Activated CD4-positive, alpha-beta memory T cell treated with anti-CD3 and anti-CD28 coated beads for 36 hours (primary cell): ENCODE measurements at regions of chr17 and their contacts with region 1.

Region 1: DNA sequence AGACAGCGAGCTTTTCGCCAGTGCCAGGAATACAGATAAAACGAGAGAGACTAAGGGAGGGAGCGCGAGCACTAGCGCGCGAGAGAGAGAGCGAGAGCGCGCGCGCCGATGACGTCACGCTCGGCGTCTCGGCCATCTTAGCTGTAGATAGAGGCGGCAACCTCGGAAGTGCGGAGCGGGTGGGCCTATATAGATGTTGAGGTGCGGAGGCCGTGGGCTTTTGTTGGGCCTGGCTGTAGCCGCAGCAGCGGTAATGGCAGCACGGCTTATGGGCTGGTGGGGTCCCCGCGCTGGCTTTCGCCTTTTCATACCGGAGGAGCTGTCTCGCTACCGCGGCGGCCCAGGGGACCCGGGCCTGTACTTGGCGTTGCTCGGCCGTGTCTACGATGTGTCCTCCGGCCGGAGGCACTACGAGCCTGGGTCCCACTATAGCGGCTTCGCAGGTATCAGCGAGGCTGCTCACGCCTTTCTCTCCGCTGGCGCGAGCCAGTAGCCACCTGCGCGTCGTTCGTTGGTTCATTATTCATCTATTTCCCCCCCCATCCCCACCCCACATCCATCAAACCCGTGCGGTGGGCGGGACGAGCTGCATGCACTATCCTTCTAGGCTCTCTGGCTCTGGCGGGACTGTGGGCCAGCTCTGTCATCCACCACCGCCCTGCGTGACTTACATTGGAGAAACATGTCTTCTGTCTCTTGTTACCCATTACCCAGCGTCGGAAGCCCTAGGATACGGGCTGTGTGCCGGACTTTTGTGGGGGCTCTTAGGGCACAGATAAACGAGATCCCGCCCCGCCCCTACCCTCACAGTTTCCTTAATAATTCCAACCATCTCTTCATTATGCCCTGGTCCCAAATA is 795 bp downstream of the CYB5D2 start:
- DNase-seq: peak; percentile 93
- H3K4me3 Mint-ChIP-seq: peak overlapping the region; percentile 96
- H3K27ac Mint-ChIP-seq: peak overlapping the region; percentile 99
- H3K4me1 Mint-ChIP-seq: peaks cover 40% of the 10 kb centered on the region
- H3K27me3 Mint-ChIP-seq: no peaks in the 10 kb centered on the region

Region 2: GRCh38 chr17:4127555-4127954 is 16.2 kb before region 1 on chr17:
- CTCF ChIA-PET with region 1: no interaction called
- POLR2A ChIA-PET with region 1: interaction called, 13 read pairs
- intact Hi-C with region 1: no loop called
- DNase-seq: no peak
- H3K4me3 Mint-ChIP-seq: no peak overlapping the region
- H3K27ac Mint-ChIP-seq: peak overlapping the region; percentile 7
- H3K4me1 Mint-ChIP-seq: peaks cover 44% of the 10 kb centered on the region
- H3K27me3 Mint-ChIP-seq: no peaks in the 10 kb centered on the region

Region 3: DNA sequence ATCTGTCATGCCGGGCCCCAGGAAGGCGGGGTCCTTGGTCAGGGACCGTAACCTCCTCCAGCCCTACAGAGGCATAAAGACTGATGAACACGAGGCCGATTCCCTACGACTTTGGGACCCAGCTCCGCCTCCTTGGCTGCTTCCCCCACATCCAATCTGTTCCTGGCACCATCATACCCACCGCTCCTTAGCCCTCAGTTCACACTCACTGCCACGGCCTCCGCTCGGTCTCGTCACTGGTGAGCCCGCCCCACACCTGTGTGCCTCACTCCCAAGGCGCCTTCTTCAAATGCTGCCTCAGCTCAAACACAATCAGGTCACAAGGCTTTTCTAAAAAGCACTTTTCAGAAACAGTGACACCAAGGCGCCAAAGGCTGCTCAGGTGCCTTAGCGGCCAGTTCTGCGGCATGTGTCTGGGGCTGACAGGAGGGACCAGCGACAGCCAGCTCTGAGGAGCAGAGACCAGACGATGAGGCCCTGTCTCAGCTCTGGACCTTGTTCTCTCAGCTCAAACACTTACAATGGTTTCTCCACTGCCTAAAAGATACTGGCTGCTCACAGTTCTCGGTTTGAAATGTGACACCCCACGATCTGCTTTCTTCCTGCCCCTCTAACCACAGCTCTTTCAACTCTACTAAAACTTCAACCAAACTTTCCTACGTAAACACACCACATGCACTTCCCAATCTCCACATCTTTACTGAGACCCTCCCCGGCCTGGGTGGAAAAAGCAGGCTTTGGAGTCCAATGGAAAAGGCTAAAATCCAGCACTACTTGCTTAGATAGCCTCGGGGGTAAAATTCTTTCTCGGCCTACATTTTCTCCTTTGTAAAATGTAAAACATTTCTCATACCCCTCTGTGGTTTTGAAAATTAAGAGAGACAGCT is 32.4 kb after region 1 on chr17:
- CTCF ChIA-PET with region 1: interaction called, 4 read pairs
- POLR2A ChIA-PET with region 1: interaction called, 27 read pairs
- intact Hi-C with region 1: loop called (anchors 1 kb)
- DNase-seq: peak; percentile 62
- H3K4me3 Mint-ChIP-seq: peak overlapping the region; percentile 71
- H3K27ac Mint-ChIP-seq: peak overlapping the region; percentile 99
- H3K4me1 Mint-ChIP-seq: peaks cover 53% of the 10 kb centered on the region
- H3K27me3 Mint-ChIP-seq: no peaks in the 10 kb centered on the region

Region 4: GRCh38 chr17:4276511-4276910 is 132.7 kb after region 1 on chr17:
- CTCF ChIA-PET with region 1: no interaction called
- POLR2A ChIA-PET with region 1: no interaction called
- intact Hi-C with region 1: no loop called
- DNase-seq: no peak
- H3K4me3 Mint-ChIP-seq: no peak overlapping the region
- H3K27ac Mint-ChIP-seq: no peak overlapping the region
- H3K4me1 Mint-ChIP-seq: peaks cover 4% of the 10 kb centered on the region
- H3K27me3 Mint-ChIP-seq: no peaks in the 10 kb centered on the region

Region 5: GRCh38 chr17:4375039-4375748 is 231.4 kb after region 1 on chr17:
- CTCF ChIA-PET with region 1: no interaction called
- POLR2A ChIA-PET with region 1: interaction called, 4 read pairs
- intact Hi-C with region 1: loop called (anchors 2 kb)
- DNase-seq: peak; percentile 89
- H3K4me3 Mint-ChIP-seq: peak overlapping the region; percentile 25
- H3K27ac Mint-ChIP-seq: peak overlapping the region; percentile 93
- H3K4me1 Mint-ChIP-seq: peaks cover 24% of the 10 kb centered on the region
- H3K27me3 Mint-ChIP-seq: no peaks in the 10 kb centered on the region